K562 (cell line): ENCODE measurements at regions of chr9 and their contacts with region 1.

Region 1: DNA sequence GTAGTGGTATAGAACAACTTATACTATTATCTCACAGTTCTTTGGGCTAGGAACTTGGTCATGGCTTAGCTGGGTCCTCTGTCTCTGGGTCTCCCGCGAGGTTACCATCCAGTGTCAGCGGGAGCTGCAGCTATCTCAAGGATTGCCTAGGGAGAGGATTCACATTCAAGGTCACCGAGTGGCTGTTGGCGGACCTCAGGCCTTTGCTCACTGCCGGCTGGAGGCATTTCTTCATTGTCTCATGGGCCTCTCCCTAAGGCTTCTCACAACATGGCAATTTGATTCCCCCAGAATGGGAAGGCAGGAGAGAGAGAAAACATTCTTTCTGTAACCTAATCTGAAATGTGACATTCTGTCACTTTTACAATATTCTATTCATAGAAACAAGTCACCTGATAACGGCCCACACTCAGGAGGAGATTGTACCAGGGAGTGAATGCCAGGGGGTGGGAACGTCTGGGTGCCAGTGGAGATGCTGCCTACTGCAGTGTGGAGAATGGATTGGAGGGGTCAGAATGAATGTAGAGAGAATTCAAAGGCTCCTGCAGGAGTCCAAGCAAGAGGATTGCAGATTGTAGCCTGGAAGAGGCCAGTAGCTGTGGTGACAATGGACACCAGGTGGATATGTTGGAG is 29.5 kb upstream of the ANKRD18A start:
- DNase-seq: no peak
- ATAC-seq: no peak
- H3K4me3 ChIP-seq: no peak overlapping the region
- H3K27ac ChIP-seq: no peak overlapping the region
- H3K4me1 ChIP-seq: no peaks in the 10 kb centered on the region
- H3K27me3 ChIP-seq: no peaks in the 10 kb centered on the region; a peak in 1 of 5 replicates
- CTCF ChIP-seq: no peak
- EP300 ChIP-seq: no peak
- POLR2A ChIP-seq: no peak
- RAD21 ChIP-seq: no peak

Region 2: GRCh38 chr9:38694676-38695075 is 44.8 kb after region 1 on chr9:
- CTCF ChIA-PET with region 1: no interaction called
- POLR2A ChIA-PET with region 1: no interaction called
- in situ Hi-C with region 1: no loop called
- intact Hi-C with region 1: loop called (anchors 5 kb)
- DNase-seq: no peak
- ATAC-seq: no peak
- H3K4me3 ChIP-seq: no peak overlapping the region
- H3K27ac ChIP-seq: no peak overlapping the region
- H3K4me1 ChIP-seq: no peaks in the 10 kb centered on the region
- H3K27me3 ChIP-seq: peaks cover 12 to 16% of the 10 kb centered on the region in 2 experiments; a peak in 3 of 5 replicates
- CTCF ChIP-seq: no peak
- EP300 ChIP-seq: no peak
- POLR2A ChIP-seq: no peak
- RAD21 ChIP-seq: no peak